ENCODE measurements at regions of chr3 and their contacts with region 1.

Region 1: GRCh38 chr3:112979240-112979832 is 4.4 kb upstream of the CD200R1 start:
- DNase-seq: peak in 4 of 5 donors; percentile 59 to 67 (median 62)
- H3K4me3 ChIP-seq: no peak overlapping the region
- H3K4me3 Mint-ChIP-seq: peak overlapping the region in 2 of 8 donors; percentile 12 to 39
- H3K27ac ChIP-seq: no peak overlapping the region
- H3K27ac Mint-ChIP-seq: peak overlapping the region in 6 of 7 donors; percentile 0 to 81 (median 42)
- H3K4me1 ChIP-seq: peaks cover 68% of the 10 kb centered on the region
- H3K4me1 Mint-ChIP-seq: peaks cover 48 to 73% (median 60%) of the 10 kb centered on the region in 4 donors
- H3K27me3 ChIP-seq: no peaks in the 10 kb centered on the region
- H3K27me3 Mint-ChIP-seq: no peaks in the 10 kb centered on the region

Region 2: GRCh38 chr3:112582244-112582874 is 397.0 kb before region 1 on chr3:
- CTCF ChIA-PET with region 1: interaction called, 4 read pairs
- POLR2A ChIA-PET with region 1: no interaction called
- intact Hi-C with region 1: loop called (anchors 5 kb)
- DNase-seq: peak in 4 of 5 donors; percentile 19 to 27 (median 24)
- H3K4me3 ChIP-seq: no peak overlapping the region
- H3K4me3 Mint-ChIP-seq: no peak overlapping the region
- H3K27ac ChIP-seq: no peak overlapping the region
- H3K27ac Mint-ChIP-seq: peak overlapping the region in 3 of 7 donors; percentile 17 to 47 (median 36)
- H3K4me1 ChIP-seq: no peaks in the 10 kb centered on the region
- H3K4me1 Mint-ChIP-seq: peaks cover under 1 to 2% (median 2%) of the 10 kb centered on the region in 4 donors
- H3K27me3 ChIP-seq: no peaks in the 10 kb centered on the region
- H3K27me3 Mint-ChIP-seq: no peaks in the 10 kb centered on the region

Region 3: GRCh38 chr3:112653209-112653871 is 326.0 kb before region 1 on chr3:
- CTCF ChIA-PET with region 1: interaction called, 10 read pairs
- POLR2A ChIA-PET with region 1: no interaction called
- intact Hi-C with region 1: no loop called
- DNase-seq: no peak
- H3K4me3 ChIP-seq: no peak overlapping the region
- H3K4me3 Mint-ChIP-seq: no peak overlapping the region
- H3K27ac ChIP-seq: no peak overlapping the region
- H3K27ac Mint-ChIP-seq: no peak overlapping the region
- H3K4me1 ChIP-seq: no peaks in the 10 kb centered on the region
- H3K4me1 Mint-ChIP-seq: peaks cover 5 to 10% (median 6%) of the 10 kb centered on the region in 4 donors
- H3K27me3 ChIP-seq: no peaks in the 10 kb centered on the region
- H3K27me3 Mint-ChIP-seq: no peaks in the 10 kb centered on the region

Region 4: GRCh38 chr3:112746675-112747280 is 232.6 kb before region 1 on chr3:
- CTCF ChIA-PET with region 1: interaction called, 12 read pairs
- POLR2A ChIA-PET with region 1: no interaction called
- intact Hi-C with region 1: no loop called
- DNase-seq: no peak
- H3K4me3 ChIP-seq: no peak overlapping the region
- H3K4me3 Mint-ChIP-seq: peak overlapping the region in 1 of 8 donors; percentile 61
- H3K27ac ChIP-seq: no peak overlapping the region
- H3K27ac Mint-ChIP-seq: no peak overlapping the region
- H3K4me1 ChIP-seq: peaks cover 55% of the 10 kb centered on the region
- H3K4me1 Mint-ChIP-seq: peaks cover 17 to 48% (median 28%) of the 10 kb centered on the region in 4 donors
- H3K27me3 ChIP-seq: no peaks in the 10 kb centered on the region
- H3K27me3 Mint-ChIP-seq: no peaks in the 10 kb centered on the region

Region 5: GRCh38 chr3:112814266-112814665 is 165.1 kb before region 1 on chr3:
- CTCF ChIA-PET with region 1: interaction called, 10 read pairs
- POLR2A ChIA-PET with region 1: no interaction called
- intact Hi-C with region 1: loop called (anchors 2 kb)
- DNase-seq: peak in 2 of 5 donors; percentile 9 to 13
- H3K4me3 ChIP-seq: no peak overlapping the region
- H3K4me3 Mint-ChIP-seq: peak overlapping the region in 1 of 8 donors; percentile 61
- H3K27ac ChIP-seq: no peak overlapping the region
- H3K27ac Mint-ChIP-seq: peak overlapping the region in 1 of 7 donors; percentile 68
- H3K4me1 ChIP-seq: peaks cover 27% of the 10 kb centered on the region
- H3K4me1 Mint-ChIP-seq: peaks cover 18 to 44% (median 32%) of the 10 kb centered on the region in 4 donors
- H3K27me3 ChIP-seq: no peaks in the 10 kb centered on the region
- H3K27me3 Mint-ChIP-seq: no peaks in the 10 kb centered on the region

Region 6: DNA sequence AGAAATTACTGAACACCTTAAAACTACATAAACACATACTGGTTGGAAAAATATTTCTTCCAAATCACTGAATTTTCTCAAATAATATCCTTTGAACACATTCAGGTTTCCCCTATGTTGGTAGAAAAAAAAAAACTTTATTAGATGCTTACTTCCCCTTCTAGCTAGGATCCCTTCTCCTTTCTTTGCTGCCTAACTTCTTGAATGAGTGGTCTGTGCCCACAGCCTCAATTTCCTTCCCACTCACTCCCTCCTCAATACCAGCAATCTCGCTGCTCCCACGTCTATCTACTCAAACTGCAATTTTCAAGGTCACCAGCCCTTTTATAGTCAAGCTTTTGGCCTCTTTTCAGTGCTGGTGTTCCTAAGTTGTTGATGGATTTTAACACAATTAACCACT is 12.7 kb before region 1 on chr3:
- CTCF ChIA-PET with region 1: interaction called, 24 read pairs
- POLR2A ChIA-PET with region 1: interaction called, 6 read pairs
- intact Hi-C with region 1: no loop called
- DNase-seq: no peak
- H3K4me3 ChIP-seq: no peak overlapping the region
- H3K4me3 Mint-ChIP-seq: peak overlapping the region in 5 of 8 donors; percentile 7 to 54 (median 27)
- H3K27ac ChIP-seq: no peak overlapping the region
- H3K27ac Mint-ChIP-seq: peak overlapping the region in 5 of 7 donors; percentile 3 to 81 (median 65)
- H3K4me1 ChIP-seq: peaks cover 50% of the 10 kb centered on the region
- H3K4me1 Mint-ChIP-seq: peaks cover 53 to 83% (median 68%) of the 10 kb centered on the region in 4 donors
- H3K27me3 ChIP-seq: no peaks in the 10 kb centered on the region
- H3K27me3 Mint-ChIP-seq: no peaks in the 10 kb centered on the region

Region 7: DNA sequence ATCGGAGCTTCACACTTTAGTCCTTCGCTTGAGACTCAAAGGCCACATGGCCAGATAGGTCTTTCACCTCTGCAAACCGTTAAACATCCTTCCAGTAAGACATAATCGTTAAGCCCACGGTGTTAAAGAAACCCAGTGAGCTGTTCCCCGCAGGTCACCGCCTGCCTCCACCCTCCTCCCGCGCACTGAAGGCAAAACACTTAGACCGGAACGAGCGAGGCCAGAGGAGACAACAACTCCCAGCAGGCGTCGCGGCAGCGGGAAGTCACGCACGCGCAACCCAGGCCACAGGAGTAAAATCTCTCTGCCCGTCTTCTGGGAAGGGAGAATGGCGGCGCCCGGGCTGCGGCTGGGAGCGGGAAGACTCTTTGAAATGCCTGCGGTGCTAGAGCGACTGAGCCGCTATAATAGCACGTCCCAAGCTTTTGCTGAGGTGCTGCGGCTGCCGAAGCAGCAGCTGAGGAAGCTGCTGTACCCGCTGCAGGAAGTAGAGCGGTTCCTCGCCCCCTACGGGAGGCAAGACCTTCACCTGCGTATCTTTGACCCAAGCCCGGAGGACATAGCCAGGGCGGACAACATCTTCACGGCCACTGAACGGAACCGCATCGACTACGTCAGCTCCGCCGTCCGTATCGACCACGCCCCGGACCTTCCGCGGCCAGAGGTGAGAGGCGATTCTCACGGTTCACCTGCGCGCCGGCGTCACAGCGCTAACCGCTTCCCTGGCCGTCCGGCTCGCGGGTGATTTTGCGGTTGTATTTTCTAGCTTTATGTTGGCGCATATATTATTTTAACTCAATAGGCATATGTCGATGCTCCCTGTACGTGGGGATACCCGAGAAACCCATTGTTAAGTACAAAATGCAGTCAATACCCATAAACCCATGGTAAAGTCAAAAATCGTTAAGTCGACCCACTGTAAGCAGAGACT is 11.6 kb after region 1 on chr3 and contains the start of gene GTPBP8:
- CTCF ChIA-PET with region 1: interaction called, 15 read pairs
- POLR2A ChIA-PET with region 1: interaction called, 25 read pairs
- intact Hi-C with region 1: loop called (anchors 1 kb)
- DNase-seq: peak; percentile 79 to 88 (median 81)
- H3K4me3 ChIP-seq: peak within 1 kb of the TSS; percentile 73 to 91
- H3K4me3 Mint-ChIP-seq: peak within 1 kb of the TSS; percentile 95 to 98 (median 96)
- H3K27ac ChIP-seq: peak within 1 kb of the TSS; percentile 78
- H3K27ac Mint-ChIP-seq: peak within 1 kb of the TSS; percentile 94 to 98 (median 96)
- H3K4me1 ChIP-seq: peaks cover 49% of the 10 kb centered on the region
- H3K4me1 Mint-ChIP-seq: peaks cover 51 to 80% (median 62%) of the 10 kb centered on the region in 4 donors
- H3K27me3 ChIP-seq: no peaks in the 10 kb centered on the region
- H3K27me3 Mint-ChIP-seq: no peaks in the 10 kb centered on the region
- total RNA-seq, gene GTPBP8: 36.0 to 40.0 TPM